Right ventricle myocardium inferior (tissue), 1 donor: ENCODE measurements at regions of chr19 and their contacts with region 1.

Region 1: GRCh38 chr19:38729653-38730469 is 14.4 kb downstream of the CAPN12 start:
- DNase-seq: peak; percentile 80
- ATAC-seq: peak; percentile 58

Region 2: GRCh38 chr19:38769635-38770211 is 39.9 kb after region 1 on chr19:
- intact Hi-C with region 1: loop called (anchors 2 kb)
- DNase-seq: peak; percentile 96
- ATAC-seq: peak; percentile 85

Region 3: DNA sequence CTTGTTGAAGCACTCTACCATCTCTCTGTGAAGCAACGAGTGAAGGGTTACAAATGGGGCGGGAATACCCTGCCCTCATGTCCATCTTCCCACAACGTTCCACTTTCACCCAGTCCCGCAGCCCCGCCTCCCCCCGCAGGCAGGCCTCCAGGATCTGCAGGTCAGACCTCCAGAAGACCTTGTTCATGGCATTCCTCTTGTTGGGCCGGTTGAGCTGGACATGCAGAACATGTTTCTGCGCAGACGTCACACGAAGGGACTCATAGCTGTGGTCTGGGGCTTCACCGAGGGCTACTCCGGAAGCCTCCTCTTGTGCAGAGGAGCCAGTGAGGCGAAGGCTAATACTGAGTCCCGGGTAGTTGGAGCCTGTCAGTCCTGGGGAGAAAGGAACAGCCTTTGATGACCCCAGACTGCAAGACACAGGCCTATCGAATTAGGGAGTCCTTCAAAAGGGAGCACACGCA is 101.3 kb after region 1 on chr19:
- intact Hi-C with region 1: loop called (anchors 5 kb)
- DNase-seq: peak; percentile 86
- ATAC-seq: peak; percentile 67